Activated CD4-positive, alpha-beta T cell treated with anti-CD3 and anti-CD28 coated beads for 36 hours (primary cell): ENCODE measurements at regions of chr10 and their contacts with region 1.

Region 1: GRCh38 chr10:114831186-114831867 is 9.7 kb downstream of the FHIP2A start:
- DNase-seq: no peak
- ATAC-seq: no peak
- H3K4me3 Mint-ChIP-seq: no peak overlapping the region
- H3K27ac Mint-ChIP-seq: no peak overlapping the region
- H3K4me1 Mint-ChIP-seq: peaks cover 26% of the 10 kb centered on the region
- H3K27me3 Mint-ChIP-seq: no peaks in the 10 kb centered on the region

Region 2: GRCh38 chr10:114856544-114857282 is 25.4 kb after region 1 on chr10:
- CTCF ChIA-PET with region 1: no interaction called
- POLR2A ChIA-PET with region 1: no interaction called
- intact Hi-C with region 1: loop called in 1 of 2 experiments (anchors 2 kb)
- DNase-seq: no peak
- ATAC-seq: peak; percentile 93
- H3K4me3 Mint-ChIP-seq: peak overlapping the region; percentile 19
- H3K27ac Mint-ChIP-seq: peak overlapping the region; percentile 90
- H3K4me1 Mint-ChIP-seq: peaks cover 34% of the 10 kb centered on the region
- H3K27me3 Mint-ChIP-seq: no peaks in the 10 kb centered on the region